PC-3 (cell line): ENCODE measurements at regions of chr7 and their contacts with region 1.

Region 1: DNA sequence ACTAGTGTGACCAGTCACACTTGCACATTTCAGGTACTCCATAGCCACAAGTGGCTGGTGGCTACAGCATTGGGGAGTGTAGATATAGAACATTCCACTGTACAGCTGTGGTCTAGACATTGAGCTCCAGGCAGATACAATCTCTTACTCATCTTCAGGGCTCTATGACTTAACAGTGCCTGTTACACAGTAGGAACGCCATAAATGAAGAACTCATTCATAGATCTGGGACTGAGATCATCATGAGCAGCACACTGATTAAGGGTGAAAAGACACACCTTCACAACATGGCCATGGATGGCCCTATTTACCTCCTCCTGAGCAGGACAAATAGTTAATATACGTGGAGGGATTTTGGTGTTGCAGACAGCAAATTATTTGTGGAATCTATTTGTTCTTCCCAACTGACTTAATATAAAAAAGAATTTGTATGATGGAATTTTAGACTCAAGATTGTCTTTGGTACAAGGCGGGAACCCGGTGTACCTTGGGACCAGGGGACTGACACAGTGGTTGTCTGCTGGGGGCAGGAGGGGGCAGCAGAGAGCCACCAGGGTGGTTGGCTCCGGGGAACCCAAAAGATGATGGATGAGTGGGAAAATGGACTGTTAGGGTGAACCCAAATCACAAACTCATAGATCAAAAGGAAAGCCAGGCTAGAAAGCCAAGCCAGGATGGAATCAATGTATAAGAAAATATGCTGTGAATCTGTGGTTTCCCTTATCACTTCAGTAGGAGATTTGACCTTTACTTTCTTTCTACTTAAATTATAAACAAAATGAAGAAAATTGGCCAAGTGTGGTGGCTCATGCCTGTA is 24.3 kb upstream of the CPA2 start:
- DNase-seq: peak; percentile 60
- ATAC-seq: peak; percentile 95
- H3K4me3 ChIP-seq: no peak overlapping the region
- H3K27ac ChIP-seq: no peak overlapping the region
- H3K4me1 ChIP-seq: peaks cover 10% of the 10 kb centered on the region; the same call in 1 of the 2 replicates
- H3K27me3 ChIP-seq: no peaks in the 10 kb centered on the region
- CTCF ChIP-seq: peak; percentile 93

Region 2: GRCh38 chr7:130356121-130356875 is 113.9 kb after region 1 on chr7:
- CTCF ChIA-PET with region 1: no interaction called
- POLR2A ChIA-PET with region 1: no interaction called
- intact Hi-C with region 1: loop called (anchors 5 kb)
- DNase-seq: peak; percentile 97
- ATAC-seq: peak; percentile 89
- H3K4me3 ChIP-seq: peak overlapping the region; percentile 38; the same call in 1 of the 2 replicates
- H3K27ac ChIP-seq: peak overlapping the region; percentile 92
- H3K4me1 ChIP-seq: peaks cover 37% of the 10 kb centered on the region
- H3K27me3 ChIP-seq: no peaks in the 10 kb centered on the region
- CTCF ChIP-seq: no peak

Region 3: GRCh38 chr7:130486114-130486958 is 243.9 kb after region 1 on chr7:
- CTCF ChIA-PET with region 1: no interaction called
- POLR2A ChIA-PET with region 1: no interaction called
- intact Hi-C with region 1: loop called (anchors 2 kb)
- DNase-seq: peak; percentile 85
- ATAC-seq: peak; percentile 74
- H3K4me3 ChIP-seq: peak overlapping the region; percentile 76
- H3K27ac ChIP-seq: peak overlapping the region; percentile 31; the same call in 1 of the 2 replicates
- H3K4me1 ChIP-seq: peaks cover 14% of the 10 kb centered on the region
- H3K27me3 ChIP-seq: no peaks in the 10 kb centered on the region
- CTCF ChIP-seq: peak; percentile 75

Region 4: DNA sequence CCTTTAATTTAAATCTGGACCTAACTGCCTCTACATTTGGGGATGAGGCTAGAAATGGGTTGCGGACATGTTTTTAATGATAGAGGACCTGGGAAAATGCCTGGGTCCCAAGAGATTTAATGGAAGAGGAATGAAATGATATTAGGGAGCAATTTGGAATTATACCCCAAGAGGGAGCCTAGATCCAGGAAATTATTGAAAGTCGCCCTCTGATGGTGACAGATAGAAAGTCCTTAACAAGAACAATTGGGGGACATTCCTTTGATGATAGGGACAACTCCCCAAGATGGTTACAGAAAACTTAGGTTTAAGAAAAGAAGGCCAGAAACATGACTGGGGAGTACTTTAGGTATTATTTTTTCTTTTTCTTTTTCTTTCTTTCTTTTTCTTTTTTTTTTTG is 453.4 kb after region 1 on chr7:
- CTCF ChIA-PET with region 1: no interaction called
- POLR2A ChIA-PET with region 1: no interaction called
- intact Hi-C with region 1: loop called (anchors 1 kb)
- DNase-seq: peak; percentile 57
- ATAC-seq: peak; percentile 54
- H3K4me3 ChIP-seq: no peak overlapping the region
- H3K27ac ChIP-seq: no peak overlapping the region
- H3K4me1 ChIP-seq: no peaks in the 10 kb centered on the region
- H3K27me3 ChIP-seq: no peaks in the 10 kb centered on the region
- CTCF ChIP-seq: peak; percentile 78

Region 5: GRCh38 chr7:130758429-130759056 is 516.1 kb after region 1 on chr7:
- CTCF ChIA-PET with region 1: no interaction called
- POLR2A ChIA-PET with region 1: no interaction called
- intact Hi-C with region 1: loop called (anchors 2 kb)
- DNase-seq: peak; percentile 67
- ATAC-seq: peak; percentile 70
- H3K4me3 ChIP-seq: no peak overlapping the region
- H3K27ac ChIP-seq: no peak overlapping the region
- H3K4me1 ChIP-seq: no peaks in the 10 kb centered on the region
- H3K27me3 ChIP-seq: peaks cover under 1% of the 10 kb centered on the region; the same call in 1 of the 2 replicates
- CTCF ChIP-seq: peak; percentile 83